ENCODE measurements at regions of chr9 and their contacts with region 1.

Region 1: GRCh38 chr9:32665101-32665500 is 29.6 kb upstream of the TAF1L start:
- DNase-seq: peak; percentile 88
- ATAC-seq: peak; percentile 100
- H3K4me3 ChIP-seq: no peak overlapping the region; the same call in 1 of the 2 replicates
- H3K27ac ChIP-seq: peak overlapping the region; percentile 93
- H3K4me1 ChIP-seq: peaks cover 29% of the 10 kb centered on the region
- H3K27me3 ChIP-seq: no peaks in the 10 kb centered on the region
- CTCF ChIP-seq: no peak

Region 2: DNA sequence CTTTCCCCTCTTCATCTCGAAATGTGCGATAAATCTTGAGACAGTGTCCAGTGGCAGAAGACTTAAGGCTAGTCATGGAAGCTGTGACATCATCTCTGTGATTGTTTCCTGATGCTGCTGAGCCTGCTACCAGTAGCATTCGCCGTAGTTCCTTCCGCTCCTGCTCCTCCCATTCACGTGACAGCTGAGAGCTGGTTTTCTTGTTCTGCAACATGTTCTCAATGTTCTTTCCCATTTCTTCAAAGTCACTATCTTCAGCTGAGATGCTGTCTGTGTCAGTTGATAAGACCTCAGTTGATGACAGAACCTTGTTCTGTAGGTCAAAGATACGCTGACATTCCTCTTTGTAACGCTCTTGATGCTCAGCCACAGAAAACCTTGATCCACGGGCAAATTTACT is 33.1 kb before region 1 on chr9:
- CTCF ChIA-PET with region 1: no interaction called
- POLR2A ChIA-PET with region 1: interaction called, 13 read pairs
- intact Hi-C with region 1: no loop called
- DNase-seq: no peak
- ATAC-seq: no peak
- H3K4me3 ChIP-seq: no peak overlapping the region
- H3K27ac ChIP-seq: no peak overlapping the region
- H3K4me1 ChIP-seq: peaks cover 12% of the 10 kb centered on the region
- H3K27me3 ChIP-seq: peaks cover 27% of the 10 kb centered on the region
- CTCF ChIP-seq: no peak

Region 3: GRCh38 chr9:32703635-32704034 is 38.5 kb after region 1 on chr9:
- CTCF ChIA-PET with region 1: interaction called, 3 read pairs
- POLR2A ChIA-PET with region 1: interaction called, 3 read pairs
- intact Hi-C with region 1: loop called (anchors 5 kb)
- DNase-seq: peak; percentile 29
- ATAC-seq: no peak
- H3K4me3 ChIP-seq: no peak overlapping the region
- H3K27ac ChIP-seq: no peak overlapping the region
- H3K4me1 ChIP-seq: peaks cover 59% of the 10 kb centered on the region
- H3K27me3 ChIP-seq: no peaks in the 10 kb centered on the region
- CTCF ChIP-seq: peak; percentile 60

Measured in PC-3 (cell line).